Heart left ventricle (tissue), 16 donors: ENCODE measurements at regions of chr2 and their contacts with region 1.

Region 1: DNA sequence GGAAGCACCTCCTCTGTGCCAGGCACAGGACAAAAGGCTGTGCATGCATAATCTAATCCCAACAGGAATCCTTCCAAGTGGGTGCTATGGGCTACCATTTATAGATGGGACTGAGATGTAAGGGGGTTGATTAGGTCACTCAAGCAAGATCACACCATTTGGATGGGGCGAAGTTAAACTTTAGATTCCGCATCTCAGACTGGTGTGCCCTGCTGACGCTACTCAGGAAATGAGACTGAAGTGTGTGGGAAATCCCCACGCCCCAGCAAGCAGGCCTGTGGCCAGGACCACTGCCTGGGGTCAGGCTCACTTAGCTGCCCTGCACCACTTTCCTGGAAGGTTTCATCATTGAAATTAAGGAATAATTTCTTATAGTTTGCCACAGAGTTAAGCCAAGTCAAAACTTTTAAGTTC is 70.5 kb upstream of the PPP1CB start:
- DNase-seq: peak in 2 of 5 donors; percentile 42 to 46
- ATAC-seq: peak in 1 of 4 donors; percentile 52
- H3K4me3 ChIP-seq: no peak overlapping the region
- H3K27ac ChIP-seq: peak overlapping the region in 10 of 12 donors; percentile 8 to 83 (median 74)
- H3K4me1 ChIP-seq: peaks cover 14 to 74% (median 52%) of the 10 kb centered on the region in 12 donors
- H3K27me3 ChIP-seq: no peaks in the 10 kb centered on the region
- CTCF ChIP-seq: no peak
- POLR2A ChIP-seq: no peak

Region 2: DNA sequence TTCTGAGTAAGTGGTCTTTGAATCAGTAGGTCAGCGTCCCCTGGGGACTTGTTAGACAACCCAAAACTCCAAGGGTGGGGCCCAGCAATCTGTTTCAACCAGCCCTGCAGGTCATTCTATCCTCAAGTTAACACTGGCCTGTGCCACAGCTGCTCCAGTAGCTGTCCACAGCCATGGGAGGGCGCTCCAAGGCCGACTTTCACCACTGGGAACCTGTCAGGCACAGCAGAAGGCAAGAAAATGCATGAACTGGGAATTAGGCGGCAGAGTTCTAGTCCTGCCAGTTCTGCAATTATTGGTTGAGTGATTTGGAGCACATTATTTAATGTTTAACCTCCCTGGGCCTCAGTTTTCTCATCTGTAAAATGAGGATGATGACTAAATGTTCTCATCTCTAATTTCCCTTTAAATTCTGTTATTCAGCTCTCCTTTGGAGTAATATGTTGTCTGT is 927.0 kb before region 1 on chr2:
- intact Hi-C with region 1: no loop called
- DNase-seq: peak; percentile 75 to 91 (median 82)
- ATAC-seq: peak; percentile 69 to 86 (median 84)
- H3K4me3 ChIP-seq: no peak overlapping the region
- H3K27ac ChIP-seq: no peak overlapping the region
- H3K4me1 ChIP-seq: peaks cover 0 to 32% (median 3%) of the 10 kb centered on the region in 12 donors
- H3K27me3 ChIP-seq: no peaks in the 10 kb centered on the region
- CTCF ChIP-seq: peak; percentile 73 to 90 (median 81)
- POLR2A ChIP-seq: no peak

Region 3: GRCh38 chr2:27901234-27901633 is 779.9 kb before region 1 on chr2:
- intact Hi-C with region 1: no loop called
- DNase-seq: no peak
- ATAC-seq: peak in 1 of 4 donors; percentile 29
- H3K4me3 ChIP-seq: no peak overlapping the region
- H3K27ac ChIP-seq: no peak overlapping the region
- H3K4me1 ChIP-seq: peaks cover 0 to 23% (median 7%) of the 10 kb centered on the region in 12 donors
- H3K27me3 ChIP-seq: no peaks in the 10 kb centered on the region
- CTCF ChIP-seq: no peak
- POLR2A ChIP-seq: no peak

Region 4: GRCh38 chr2:28621172-28622100 is 59.7 kb before region 1 on chr2:
- intact Hi-C with region 1: loop called in 1 of 10 experiments (anchors 10 kb)
- DNase-seq: peak; percentile 60 to 76 (median 69)
- ATAC-seq: peak; percentile 80 to 93 (median 84)
- H3K4me3 ChIP-seq: peak overlapping the region in 1 of 12 donors; percentile 12
- H3K27ac ChIP-seq: peak overlapping the region; percentile 49 to 93 (median 72)
- H3K4me1 ChIP-seq: peaks cover 0 to 56% (median 40%) of the 10 kb centered on the region in 12 donors
- H3K27me3 ChIP-seq: no peaks in the 10 kb centered on the region
- CTCF ChIP-seq: peak in 9 of 12 donors; percentile 17 to 43 (median 24)
- POLR2A ChIP-seq: no peak